ENCODE measurements at regions of chr22 and their contacts with region 1.

Region 1: GRCh38 chr22:47259990-47260389 is 497.5 kb downstream of the TBC1D22A start:
- DNase-seq: no peak
- H3K4me3 ChIP-seq: no peak overlapping the region
- H3K4me1 ChIP-seq: no peaks in the 10 kb centered on the region
- H3K27me3 ChIP-seq: no peaks in the 10 kb centered on the region

Region 2: DNA sequence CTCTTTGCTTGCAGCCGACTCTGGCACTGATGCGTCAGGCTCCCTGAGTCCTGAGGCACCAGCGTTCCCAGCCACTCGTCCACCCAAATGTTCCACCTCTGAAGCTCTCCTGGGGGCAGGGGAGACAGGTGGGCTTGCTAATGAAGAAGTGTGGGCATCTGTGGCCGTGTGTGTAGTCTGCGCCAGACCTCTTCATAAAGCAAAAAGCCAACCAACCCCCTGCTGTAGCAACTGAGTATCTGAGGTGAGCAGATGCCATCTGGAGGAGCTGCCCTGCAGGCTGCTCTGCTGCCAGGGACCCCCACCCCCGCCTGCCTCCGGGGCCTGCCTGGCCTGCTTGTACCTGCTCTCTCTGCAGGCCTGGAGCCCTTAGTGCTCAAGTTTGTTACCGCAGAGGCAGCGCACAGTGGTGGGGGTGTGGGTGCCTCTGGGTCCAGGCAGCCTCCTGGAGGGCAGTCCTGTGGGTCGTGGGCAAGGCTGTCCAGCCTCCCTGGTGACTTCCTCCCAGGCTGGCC is 225.0 kb before region 1 on chr22:
- in situ Hi-C with region 1: no loop called
- DNase-seq: no peak
- H3K4me3 ChIP-seq: no peak overlapping the region
- H3K4me1 ChIP-seq: peaks cover 10% of the 10 kb centered on the region
- H3K27me3 ChIP-seq: no peaks in the 10 kb centered on the region

Region 3: GRCh38 chr22:47192651-47193490 is 67.1 kb before region 1 on chr22:
- in situ Hi-C with region 1: loop called (anchors 10 kb)
- DNase-seq: peak in 1 of 2 experiments; percentile 41
- H3K4me3 ChIP-seq: no peak overlapping the region
- H3K4me1 ChIP-seq: no peaks in the 10 kb centered on the region
- H3K27me3 ChIP-seq: no peaks in the 10 kb centered on the region